ENCODE measurements at regions of chr3 and their contacts with region 1.

Region 1: DNA sequence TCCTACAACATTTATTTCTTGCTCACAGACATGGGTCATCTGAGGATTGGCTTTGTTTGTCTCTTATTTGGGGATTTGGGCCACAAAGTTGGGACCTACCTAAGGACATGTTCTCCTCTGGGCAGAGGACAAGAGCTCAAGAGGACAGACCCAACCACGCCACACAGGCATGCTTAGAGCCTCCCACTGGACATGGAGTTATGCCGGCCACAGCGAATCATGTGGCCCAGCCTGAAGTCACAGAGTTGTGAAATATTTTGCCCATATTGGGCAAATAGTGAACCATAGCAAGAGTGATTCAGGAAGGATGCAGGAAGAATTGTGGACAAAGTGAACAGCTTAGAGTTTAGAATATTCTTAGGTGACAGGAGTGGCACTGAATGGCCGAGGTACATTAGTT is 9.9 kb downstream of the TRAK1 start:
- DNase-seq: no peak
- H3K4me3 ChIP-seq: no peak overlapping the region
- H3K27ac ChIP-seq: no peak overlapping the region
- H3K4me1 ChIP-seq: peaks cover 0 to 7% (median 3%) of the 10 kb centered on the region in 4 experiments; a peak in 3 of 7 replicates
- H3K27me3 ChIP-seq: no peaks in the 10 kb centered on the region
- CTCF ChIP-seq: no peak
- EP300 ChIP-seq: no peak
- POLR2A ChIP-seq: no peak
- RAD21 ChIP-seq: no peak

Region 2: DNA sequence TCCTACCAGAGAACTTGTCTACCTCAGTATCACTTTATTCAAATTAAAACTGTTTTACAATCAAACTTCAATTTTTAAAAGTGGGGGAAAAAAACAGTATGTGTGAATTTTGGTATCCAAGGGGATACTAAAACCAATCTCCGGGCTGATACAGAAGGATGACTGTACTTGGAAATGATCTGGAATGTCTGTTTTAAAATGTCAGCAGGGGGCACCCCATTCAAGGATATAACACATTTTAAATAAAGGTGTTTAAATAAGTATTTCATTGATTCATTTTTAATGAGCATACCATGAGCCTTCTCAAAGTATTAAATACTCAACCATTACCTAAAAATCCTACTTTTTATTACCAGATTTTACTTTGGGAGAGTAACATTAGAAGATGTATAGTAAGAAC is 207.1 kb before region 1 on chr3:
- CTCF ChIA-PET with region 1: interaction called, 40 read pairs
- POLR2A ChIA-PET with region 1: no interaction called
- DNase-seq: no peak
- H3K4me3 ChIP-seq: no peak overlapping the region
- H3K27ac ChIP-seq: no peak overlapping the region
- H3K4me1 ChIP-seq: peaks cover 0 to 2% (median 0%) of the 10 kb centered on the region in 4 experiments; a peak in 3 of 7 replicates
- H3K27me3 ChIP-seq: no peaks in the 10 kb centered on the region
- CTCF ChIP-seq: peak in 1 of 3 experiments; percentile 5; a peak in 1 of 4 replicates
- EP300 ChIP-seq: no peak
- POLR2A ChIP-seq: no peak
- RAD21 ChIP-seq: peak; percentile 48 to 57

Region 3: GRCh38 chr3:41997702-41998550 is 103.1 kb before region 1 on chr3:
- CTCF ChIA-PET with region 1: interaction called, 46 read pairs
- POLR2A ChIA-PET with region 1: no interaction called
- DNase-seq: peak in 1 of 2 experiments; percentile 75
- H3K4me3 ChIP-seq: no peak overlapping the region
- H3K27ac ChIP-seq: no peak overlapping the region
- H3K4me1 ChIP-seq: peaks cover 0 to 2% (median under 1%) of the 10 kb centered on the region in 4 experiments; a peak in 3 of 7 replicates
- H3K27me3 ChIP-seq: no peaks in the 10 kb centered on the region
- CTCF ChIP-seq: peak in 2 of 3 experiments; percentile 50 to 68; a peak in 3 of 4 replicates
- EP300 ChIP-seq: no peak
- POLR2A ChIP-seq: no peak
- RAD21 ChIP-seq: peak; percentile 48 to 65

Region 4: GRCh38 chr3:42051384-42052131 is 49.5 kb before region 1 on chr3:
- CTCF ChIA-PET with region 1: interaction called, 16 read pairs
- POLR2A ChIA-PET with region 1: no interaction called
- DNase-seq: no peak
- H3K4me3 ChIP-seq: no peak overlapping the region
- H3K27ac ChIP-seq: no peak overlapping the region
- H3K4me1 ChIP-seq: peaks cover 6 to 24% (median 18%) of the 10 kb centered on the region in 4 experiments
- H3K27me3 ChIP-seq: no peaks in the 10 kb centered on the region
- CTCF ChIP-seq: no peak
- EP300 ChIP-seq: no peak
- POLR2A ChIP-seq: no peak
- RAD21 ChIP-seq: no peak

Region 5: DNA sequence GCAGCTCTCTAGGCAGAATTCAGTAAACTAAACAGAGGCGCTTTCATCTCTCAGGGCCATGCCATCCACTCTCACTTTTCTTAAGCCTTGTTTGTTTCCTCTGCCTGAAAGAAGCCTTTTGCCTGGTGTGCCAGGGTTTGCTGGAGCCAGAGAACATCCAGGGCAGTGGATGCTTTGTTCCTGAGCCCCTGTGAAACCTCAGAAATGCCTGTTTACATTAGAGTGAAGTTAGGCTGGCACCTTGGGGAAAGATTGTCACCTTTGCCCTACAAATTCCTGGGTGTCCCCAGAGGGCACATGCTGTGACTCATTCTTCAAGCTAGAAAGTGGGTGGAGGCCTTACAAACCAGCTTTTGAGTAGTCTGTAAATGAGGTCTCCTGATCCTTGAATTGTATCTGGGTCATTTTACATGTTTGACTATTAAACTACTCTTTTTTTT is 20.6 kb before region 1 on chr3:
- CTCF ChIA-PET with region 1: interaction called, 37 read pairs
- POLR2A ChIA-PET with region 1: no interaction called
- DNase-seq: no peak
- H3K4me3 ChIP-seq: no peak overlapping the region
- H3K27ac ChIP-seq: no peak overlapping the region
- H3K4me1 ChIP-seq: peaks cover 4 to 10% (median 5%) of the 10 kb centered on the region in 4 experiments; a peak in 5 of 7 replicates
- H3K27me3 ChIP-seq: no peaks in the 10 kb centered on the region
- CTCF ChIP-seq: no peak
- EP300 ChIP-seq: no peak
- POLR2A ChIP-seq: no peak
- RAD21 ChIP-seq: no peak

Region 6: GRCh38 chr3:42129014-42129953 is 28.2 kb after region 1 on chr3:
- CTCF ChIA-PET with region 1: no interaction called
- POLR2A ChIA-PET with region 1: no interaction called
- DNase-seq: no peak
- H3K4me3 ChIP-seq: no peak overlapping the region
- H3K27ac ChIP-seq: no peak overlapping the region
- H3K4me1 ChIP-seq: peaks cover 0 to 5% (median 2%) of the 10 kb centered on the region in 4 experiments; a peak in 2 of 7 replicates
- H3K27me3 ChIP-seq: no peaks in the 10 kb centered on the region
- CTCF ChIP-seq: no peak
- EP300 ChIP-seq: no peak
- POLR2A ChIP-seq: no peak
- RAD21 ChIP-seq: no peak